Ovary (tissue), 10 donors: ENCODE measurements at regions of chr2 and their contacts with region 1.

Region 1: GRCh38 chr2:21646345-21646744 is 522.6 kb downstream of the TDRD15 start:
- DNase-seq: no peak
- H3K4me3 ChIP-seq: no peak overlapping the region
- H3K27ac ChIP-seq: no peak overlapping the region
- H3K4me1 ChIP-seq: peaks cover 18% of the 10 kb centered on the region
- H3K27me3 ChIP-seq: no peaks in the 10 kb centered on the region
- CTCF ChIP-seq: no peak
- EP300 ChIP-seq: no peak
- POLR2A ChIP-seq: no peak

Region 2: DNA sequence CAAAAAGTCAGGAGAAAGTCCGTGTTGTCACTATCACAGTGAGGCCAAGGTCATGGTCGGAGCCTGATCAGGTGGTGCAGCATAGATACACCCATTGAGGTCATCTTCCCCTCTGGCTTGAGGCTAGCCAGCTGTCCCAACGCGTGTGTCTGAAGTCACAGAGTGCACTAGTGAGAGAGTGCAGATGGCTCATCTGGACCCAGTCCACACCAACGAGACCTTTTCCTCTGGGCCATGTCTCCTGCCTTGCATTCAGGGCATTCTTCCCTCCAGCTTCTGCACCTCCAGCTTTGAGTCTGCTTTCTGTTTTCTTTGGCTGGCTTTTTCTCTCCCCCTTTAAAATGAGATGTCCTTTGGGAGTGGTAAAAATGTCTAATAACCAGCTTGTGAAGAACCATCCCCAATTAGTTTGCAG is 375.6 kb before region 1 on chr2:
- intact Hi-C with region 1: loop called in 1 of 4 experiments (anchors 5 kb)
- DNase-seq: peak; percentile 80 to 92 (median 88)
- H3K4me3 ChIP-seq: no peak overlapping the region
- H3K27ac ChIP-seq: peak overlapping the region in 1 of 2 donors; percentile 80
- H3K4me1 ChIP-seq: peaks cover 17% of the 10 kb centered on the region
- H3K27me3 ChIP-seq: no peaks in the 10 kb centered on the region
- CTCF ChIP-seq: no peak
- EP300 ChIP-seq: no peak
- POLR2A ChIP-seq: no peak

Region 3: GRCh38 chr2:21395366-21395765 is 251.0 kb before region 1 on chr2:
- intact Hi-C with region 1: no loop called
- DNase-seq: no peak
- H3K4me3 ChIP-seq: no peak overlapping the region
- H3K27ac ChIP-seq: no peak overlapping the region
- H3K4me1 ChIP-seq: no peaks in the 10 kb centered on the region
- H3K27me3 ChIP-seq: no peaks in the 10 kb centered on the region
- CTCF ChIP-seq: no peak
- EP300 ChIP-seq: no peak
- POLR2A ChIP-seq: no peak

Region 4: DNA sequence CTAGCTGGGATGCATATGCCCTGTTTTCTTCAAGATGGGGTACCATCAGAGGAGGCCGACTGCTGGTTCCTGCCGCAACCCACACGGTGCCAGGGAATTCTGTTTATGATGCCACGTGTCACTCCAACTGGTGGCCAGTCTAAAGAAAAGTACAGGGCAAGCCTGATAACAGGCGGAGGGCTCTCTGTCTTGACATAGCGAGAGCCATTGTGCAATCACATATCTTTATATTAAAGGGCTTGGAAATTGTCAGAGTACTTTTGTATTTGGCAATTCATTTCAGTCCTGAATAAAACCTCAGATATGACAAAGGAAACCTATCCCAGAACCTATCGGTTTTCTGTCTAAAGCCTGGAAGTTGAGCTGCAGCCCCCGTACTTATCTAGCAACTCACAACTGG is 245.8 kb after region 1 on chr2:
- intact Hi-C with region 1: no loop called
- DNase-seq: peak in 1 of 5 donors; percentile 17
- H3K4me3 ChIP-seq: no peak overlapping the region
- H3K27ac ChIP-seq: no peak overlapping the region
- H3K4me1 ChIP-seq: peaks cover 6% of the 10 kb centered on the region
- H3K27me3 ChIP-seq: no peaks in the 10 kb centered on the region
- CTCF ChIP-seq: no peak
- EP300 ChIP-seq: no peak
- POLR2A ChIP-seq: no peak